Prostate gland (tissue), 2 donors: ENCODE measurements at regions of chr7 and their contacts with region 1.

Region 1: DNA sequence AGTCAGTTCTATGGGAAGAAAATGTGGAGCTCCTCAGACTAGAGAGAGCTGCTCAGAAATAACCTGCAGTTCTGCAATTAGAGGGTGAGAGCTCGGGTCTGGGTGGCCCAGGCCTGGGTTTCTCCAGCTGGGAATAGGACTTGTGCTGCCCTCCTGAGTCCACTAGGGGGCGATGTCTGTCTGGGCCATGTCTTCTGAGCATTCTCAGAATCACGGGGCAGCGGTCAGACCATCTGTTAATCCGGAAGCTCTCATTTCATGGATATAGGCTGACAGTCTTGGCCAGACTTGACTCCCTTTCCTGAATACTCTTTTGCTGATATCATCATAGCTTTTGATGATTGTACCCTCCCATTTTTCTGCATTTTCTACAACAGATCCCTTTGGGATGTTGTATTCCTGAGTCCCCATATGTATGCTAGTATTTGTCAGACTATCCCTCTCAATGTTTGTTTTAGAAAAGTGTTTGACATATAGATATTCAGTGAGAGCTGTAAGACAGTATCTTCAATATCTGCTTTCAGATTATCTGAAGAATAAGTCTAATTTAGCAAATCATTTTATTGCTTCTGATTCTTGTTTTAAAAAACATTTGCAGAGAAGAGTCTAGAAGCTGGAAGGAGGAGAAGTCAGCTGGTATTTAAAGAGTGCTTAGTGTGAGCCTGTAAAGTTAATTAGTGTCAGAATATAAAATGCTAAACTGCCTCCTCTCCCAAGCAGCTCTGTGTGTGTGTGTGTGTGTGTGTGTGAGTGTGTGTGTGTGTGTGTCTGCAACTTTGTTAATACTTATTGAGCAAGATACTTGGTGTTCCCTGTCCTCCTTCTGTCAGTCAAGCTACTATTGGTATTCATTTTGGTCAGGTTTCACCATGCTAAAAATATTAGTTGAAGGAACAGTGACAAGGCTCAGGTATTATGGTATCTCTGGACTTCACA is 38.0 kb downstream of the STARD3NL start:
- DNase-seq: peak; percentile 82
- H3K4me3 ChIP-seq: no peak overlapping the region
- H3K27ac ChIP-seq: peak overlapping the region; percentile 69 to 79
- H3K4me1 ChIP-seq: peaks cover 8% of the 10 kb centered on the region
- H3K27me3 ChIP-seq: no peaks in the 10 kb centered on the region
- CTCF ChIP-seq: peak; percentile 87 to 98 (median 94)
- POLR2A ChIP-seq: no peak

Region 2: DNA sequence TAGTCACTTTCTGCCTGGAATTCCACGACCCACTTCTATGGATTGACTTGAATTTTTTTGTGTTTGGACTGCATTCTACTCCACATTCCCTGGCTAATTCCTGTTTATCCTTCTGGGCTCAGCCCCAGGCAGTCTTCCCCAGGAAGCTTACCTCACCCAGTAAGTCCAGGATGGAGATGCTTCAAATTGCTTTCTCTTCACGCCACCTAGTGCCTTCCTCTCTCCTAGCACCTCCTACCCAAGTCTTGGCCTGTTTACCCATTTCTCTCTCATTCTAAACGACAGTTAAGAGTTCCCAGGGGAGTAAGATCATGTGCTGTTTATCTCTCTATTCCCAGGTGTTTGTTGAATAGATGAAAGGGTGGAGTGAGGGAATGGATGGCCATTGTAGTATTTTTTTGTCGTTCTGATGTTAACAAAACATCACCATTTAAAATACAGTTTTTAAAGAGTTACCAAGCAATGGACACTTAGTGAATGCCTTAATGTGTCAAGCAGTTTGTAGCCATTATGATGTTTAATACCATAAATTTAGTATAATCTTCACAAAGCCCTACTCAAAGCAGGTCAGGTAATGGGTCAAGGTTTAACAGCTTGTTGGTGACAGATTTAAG is 102.9 kb after region 1 on chr7:
- intact Hi-C with region 1: loop called (anchors 5 kb)
- DNase-seq: peak; percentile 70
- H3K4me3 ChIP-seq: no peak overlapping the region
- H3K27ac ChIP-seq: peak overlapping the region; percentile 72 to 84
- H3K4me1 ChIP-seq: no peaks in the 10 kb centered on the region
- H3K27me3 ChIP-seq: no peaks in the 10 kb centered on the region
- CTCF ChIP-seq: peak; percentile 35 to 92 (median 69)
- POLR2A ChIP-seq: no peak